Activated naive CD4-positive, alpha-beta T cell treated with anti-CD3 and anti-CD28 coated beads, Interleukin-2, amount 10 ng/mL, durations not matched to agents 7 days and 5 days (primary cell): ENCODE measurements at regions of chr5 and their contacts with region 1.

Region 1: GRCh38 chr5:94740286-94740685 is 121.8 kb downstream of the SLF1 start:
- DNase-seq: no peak
- H3K4me3 Mint-ChIP-seq: no peak overlapping the region
- H3K27ac Mint-ChIP-seq: no peak overlapping the region
- H3K4me1 Mint-ChIP-seq: no peaks in the 10 kb centered on the region
- H3K27me3 Mint-ChIP-seq: peaks cover 4% of the 10 kb centered on the region

Region 2: DNA sequence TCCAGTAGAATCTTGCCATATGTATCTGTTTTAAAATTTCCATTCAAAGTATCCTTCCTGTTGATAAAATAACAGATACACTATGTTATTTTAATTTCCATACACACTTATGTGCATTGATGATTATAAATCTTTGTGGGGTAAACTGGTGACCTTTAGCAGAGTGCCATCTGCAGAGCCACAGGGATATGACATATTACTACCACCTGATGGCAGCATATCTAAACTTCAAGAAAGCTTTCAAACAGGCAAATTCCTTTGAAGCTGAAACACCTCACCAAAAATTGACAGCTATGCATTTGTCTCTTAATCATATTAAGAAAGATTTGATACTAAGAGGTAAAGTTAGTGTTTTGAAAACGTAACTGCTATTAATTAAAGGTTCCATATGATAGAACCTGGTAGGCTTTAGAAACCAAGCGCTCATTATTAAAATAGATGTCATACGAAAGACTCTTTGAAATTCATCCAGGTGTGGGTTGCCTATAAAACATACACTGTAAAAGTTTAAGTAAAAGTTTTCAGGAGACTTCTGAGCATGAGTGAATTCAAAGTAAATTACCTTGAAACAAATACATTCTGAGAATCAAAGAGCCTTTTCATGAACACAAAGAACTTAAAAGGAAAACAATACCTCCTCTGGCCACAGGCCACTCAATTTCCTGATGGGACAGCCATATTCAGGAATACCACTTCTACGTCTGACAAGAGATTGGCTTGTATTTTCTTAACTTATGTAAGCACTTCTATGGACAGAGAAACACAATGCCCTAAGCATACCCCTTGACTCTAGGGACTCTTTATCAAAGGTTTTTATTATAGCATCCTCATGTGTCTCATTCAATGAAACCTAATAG is 215.2 kb before region 1 on chr5:
- CTCF ChIA-PET with region 1: interaction called, 40 read pairs
- DNase-seq: peak; percentile 30
- H3K4me3 Mint-ChIP-seq: no peak overlapping the region
- H3K27ac Mint-ChIP-seq: no peak overlapping the region
- H3K4me1 Mint-ChIP-seq: no peaks in the 10 kb centered on the region
- H3K27me3 Mint-ChIP-seq: no peaks in the 10 kb centered on the region

Region 3: DNA sequence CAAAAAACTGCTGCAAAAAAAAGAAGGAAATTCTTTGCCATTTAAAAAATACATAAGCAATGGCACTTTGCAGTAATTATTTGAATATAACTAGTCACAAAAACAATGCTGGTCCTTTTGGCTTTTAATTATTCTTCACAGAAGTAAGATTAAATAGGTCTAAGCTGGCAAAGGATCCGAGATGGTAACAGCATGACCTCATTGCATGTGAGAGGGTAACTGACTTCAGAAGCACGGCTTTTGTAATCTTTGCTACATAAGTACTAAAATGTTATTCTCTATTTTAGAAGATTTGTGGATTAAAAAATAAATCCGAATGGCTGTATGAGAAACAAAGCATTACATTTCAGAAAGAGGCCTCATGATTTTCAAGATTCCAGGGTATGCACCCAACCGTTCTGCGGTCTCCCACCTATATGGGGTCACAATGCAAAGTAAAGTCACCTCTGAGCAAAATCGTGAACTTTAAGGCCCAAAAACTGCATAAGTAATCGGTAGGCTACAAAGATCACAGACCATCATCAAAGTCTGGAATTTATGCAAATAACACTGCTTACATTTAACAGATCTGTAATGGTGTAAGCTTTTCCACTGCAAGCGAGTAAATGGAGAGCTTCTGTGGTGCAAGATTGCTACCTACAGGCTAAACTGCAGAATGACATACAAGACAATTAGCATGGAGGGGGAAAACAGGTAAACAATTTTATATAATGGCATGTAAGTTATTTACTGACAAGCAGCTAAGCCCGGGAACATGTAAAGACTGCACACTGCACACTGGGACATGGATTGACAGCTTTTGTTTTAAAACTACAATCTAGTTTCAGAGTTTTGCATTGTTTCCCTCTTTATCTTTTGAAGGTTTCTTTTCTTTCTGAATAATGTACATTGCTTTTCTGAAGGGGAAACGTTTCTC is 109.8 kb after region 1 on chr5:
- CTCF ChIA-PET with region 1: interaction called, 14 read pairs
- DNase-seq: peak; percentile 40
- H3K4me3 Mint-ChIP-seq: no peak overlapping the region
- H3K27ac Mint-ChIP-seq: no peak overlapping the region
- H3K4me1 Mint-ChIP-seq: peaks cover 12% of the 10 kb centered on the region
- H3K27me3 Mint-ChIP-seq: peaks cover 4% of the 10 kb centered on the region